Panc1 (cell line): ENCODE measurements at regions of chr2 and their contacts with region 1.

Region 1: DNA sequence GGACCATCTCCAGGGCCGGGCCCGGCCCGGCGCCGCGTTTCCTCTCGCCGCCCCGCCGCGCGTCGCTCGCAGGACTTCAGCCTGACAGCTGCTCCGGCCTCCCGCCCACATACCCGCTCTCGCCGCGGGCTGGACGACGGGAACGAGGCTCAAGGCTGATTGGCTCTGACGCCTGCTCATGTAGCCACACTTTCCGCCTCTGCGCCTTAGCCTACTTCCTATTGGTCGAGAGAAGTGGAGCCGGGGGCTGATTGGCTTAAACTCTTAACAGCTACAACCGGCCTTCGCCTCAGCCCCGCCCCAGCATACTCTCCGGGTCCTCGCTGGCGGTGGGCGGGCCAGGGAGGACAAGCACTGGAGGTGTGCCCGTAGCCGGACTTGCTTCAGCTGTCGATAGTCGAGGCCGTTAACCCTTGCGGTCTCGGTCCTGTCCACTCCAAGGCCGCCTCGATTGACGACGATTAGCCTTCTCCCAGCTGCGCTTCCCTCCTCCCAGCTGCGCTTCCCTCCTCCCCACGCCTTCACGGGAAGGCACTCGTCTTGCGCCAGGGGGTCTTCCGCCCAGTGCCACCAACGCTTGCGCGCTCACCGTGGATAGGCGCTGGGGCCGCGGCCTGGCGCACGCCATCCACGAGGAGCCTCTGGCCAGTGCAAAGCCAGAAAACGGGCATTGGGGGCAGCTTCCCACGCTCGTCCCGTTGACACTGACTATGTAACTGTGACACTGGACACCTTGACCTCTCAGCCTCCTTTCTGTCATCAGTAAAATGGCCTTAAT is at the start of gene PRADC1:
- DNase-seq: peak; percentile 98
- ATAC-seq: peak; percentile 94
- H3K4me3 ChIP-seq: peak within 1 kb of the TSS; percentile 72 to 88
- H3K27ac ChIP-seq: peak within 1 kb of the TSS; percentile 97
- H3K4me1 ChIP-seq: peaks cover 27% of the 10 kb centered on the region
- H3K27me3 ChIP-seq: no peaks in the 10 kb centered on the region
- CTCF ChIP-seq: no peak
- total RNA-seq, gene PRADC1: 18.6 TPM

Region 2: GRCh38 chr2:73197579-73197978 is 35.8 kb before region 1 on chr2:
- CTCF ChIA-PET with region 1: no interaction called
- POLR2A ChIA-PET with region 1: interaction called, 10 read pairs
- in situ Hi-C with region 1: no loop called
- intact Hi-C with region 1: no loop called
- DNase-seq: no peak
- ATAC-seq: no peak
- H3K4me3 ChIP-seq: no peak overlapping the region
- H3K27ac ChIP-seq: no peak overlapping the region
- H3K4me1 ChIP-seq: peaks cover 4% of the 10 kb centered on the region; the same call in 1 of the 2 replicates
- H3K27me3 ChIP-seq: peaks cover 11% of the 10 kb centered on the region
- CTCF ChIP-seq: no peak

Region 3: DNA sequence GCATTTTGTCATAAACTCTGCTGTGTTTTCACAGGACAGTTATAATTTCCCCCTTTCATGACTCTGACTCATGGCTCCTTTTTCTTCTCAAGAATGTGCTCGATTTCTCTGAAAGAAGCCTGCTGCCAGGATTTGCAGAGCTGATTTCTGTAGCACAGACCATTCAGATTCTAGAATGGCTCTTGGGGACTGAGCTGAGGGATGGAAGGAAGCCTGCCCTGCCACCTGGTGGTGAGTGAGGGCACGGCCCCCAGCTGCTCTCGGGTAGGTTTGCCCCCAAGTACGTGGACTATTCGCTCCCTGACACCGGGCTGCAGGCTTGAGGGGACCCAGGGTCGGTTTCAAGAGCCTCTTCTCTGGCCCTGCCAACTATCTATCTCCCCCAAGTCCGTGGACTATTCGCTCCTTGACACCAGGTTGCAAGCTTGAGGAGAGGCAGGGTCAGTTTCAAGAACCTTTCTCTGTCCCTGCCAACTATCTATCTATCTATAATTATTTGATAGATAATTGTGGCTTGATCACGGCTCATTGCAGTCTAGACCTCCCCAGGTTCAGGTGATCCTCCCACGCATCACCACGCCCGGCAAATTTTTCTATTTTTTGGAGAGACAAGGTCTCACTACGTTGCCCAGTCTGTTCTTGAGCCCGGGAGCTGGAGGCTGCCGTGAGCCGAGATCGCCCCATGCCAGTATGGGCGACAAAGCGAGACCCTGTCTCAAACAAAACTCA is 20.7 kb before region 1 on chr2:
- CTCF ChIA-PET with region 1: interaction called, 14 read pairs
- POLR2A ChIA-PET with region 1: interaction called, 4 read pairs
- in situ Hi-C with region 1: no loop called
- intact Hi-C with region 1: no loop called
- DNase-seq: peak; percentile 58
- ATAC-seq: peak; percentile 87
- H3K4me3 ChIP-seq: peak overlapping the region; percentile 68 to 90
- H3K27ac ChIP-seq: no peak overlapping the region
- H3K4me1 ChIP-seq: peaks cover 6% of the 10 kb centered on the region; the same call in 1 of the 2 replicates
- H3K27me3 ChIP-seq: no peaks in the 10 kb centered on the region
- CTCF ChIP-seq: peak; percentile 98

Region 4: GRCh38 chr2:73293534-73294171 is 60.3 kb after region 1 on chr2 and contains the start of gene EGR4:
- CTCF ChIA-PET with region 1: interaction called, 4 read pairs
- POLR2A ChIA-PET with region 1: no interaction called
- in situ Hi-C with region 1: loop called (anchors 10 kb)
- intact Hi-C with region 1: no loop called
- DNase-seq: no peak
- ATAC-seq: peak; percentile 89
- H3K4me3 ChIP-seq: peak within 1 kb of the TSS; percentile 49 to 73
- H3K27ac ChIP-seq: no peak within 1 kb of the TSS
- H3K4me1 ChIP-seq: 0 out of 2 replicates have a peak, but pooled peaks cover 2% of the 10 kb centered on the region
- H3K27me3 ChIP-seq: peaks cover 49% of the 10 kb centered on the region
- CTCF ChIP-seq: no peak
- total RNA-seq, gene EGR4: 0.08 TPM